Endothelial cell of umbilical vein (primary cell): ENCODE measurements at regions of chr4 and their contacts with region 1.

Region 1: GRCh38 chr4:163554870-163555465 is 60.5 kb downstream of the TMA16 start:
- DNase-seq: peak; percentile 28
- H3K4me3 ChIP-seq: no peak overlapping the region
- H3K27ac ChIP-seq: no peak overlapping the region
- H3K4me1 ChIP-seq: no peaks in the 10 kb centered on the region
- H3K27me3 ChIP-seq: peaks cover 0 to 3% of the 10 kb centered on the region in 2 experiments
- CTCF ChIP-seq: peak; percentile 39 to 40
- POLR2A ChIP-seq: no peak

Region 2: DNA sequence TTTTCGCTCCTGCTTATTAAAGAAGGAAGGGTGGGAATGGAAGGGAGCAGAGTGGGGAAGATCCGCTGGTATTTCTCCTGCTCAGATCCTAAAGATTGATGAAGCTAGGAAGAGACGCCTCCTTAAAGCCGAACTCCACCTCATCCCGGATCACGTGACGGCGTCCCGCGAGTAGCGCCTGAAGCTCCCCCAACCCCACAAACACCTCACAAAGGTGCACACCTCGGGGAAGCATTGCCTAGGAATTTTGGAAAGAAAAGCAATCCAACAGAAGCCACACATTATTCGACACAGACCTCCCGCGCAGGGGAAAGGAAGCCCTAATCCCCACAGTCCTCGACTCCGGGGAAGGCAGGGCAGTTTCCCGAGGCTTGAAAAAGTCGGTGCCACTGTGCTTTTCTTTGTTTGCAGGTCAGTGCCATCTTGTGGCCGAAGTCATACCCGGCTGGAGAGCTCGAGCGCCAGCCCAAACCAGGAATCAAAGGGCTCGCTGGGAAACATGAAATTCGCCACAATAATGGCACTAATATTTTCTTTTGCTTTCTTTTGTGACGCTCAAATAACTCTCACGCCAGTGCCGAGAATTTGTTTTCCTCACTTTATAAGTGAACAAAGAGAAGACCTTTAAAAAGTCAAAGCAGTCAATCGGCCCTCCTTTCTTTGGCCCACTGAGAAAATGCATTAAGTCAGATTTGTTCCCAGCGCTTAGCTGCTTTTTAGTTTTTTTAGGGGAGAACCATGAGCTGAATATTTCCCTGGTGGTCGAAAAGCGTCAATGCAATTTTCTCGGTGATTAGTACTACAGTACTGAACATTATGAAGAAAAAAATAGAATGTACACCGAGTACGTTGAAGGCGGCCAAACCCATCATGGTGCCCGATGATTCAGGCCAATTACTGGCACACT is 222.2 kb before region 1 on chr4 and contains the start of gene NPY1R:
- CTCF ChIA-PET with region 1: interaction called, 16 read pairs
- POLR2A ChIA-PET with region 1: no interaction called
- dilution Hi-C with region 1: no loop called
- intact Hi-C with region 1: no loop called
- DNase-seq: peak; percentile 80
- H3K4me3 ChIP-seq: peak within 1 kb of the TSS in 2 of 3 experiments; percentile 39 to 42
- H3K27ac ChIP-seq: no peak within 1 kb of the TSS
- H3K4me1 ChIP-seq: peaks cover 6% of the 10 kb centered on the region
- H3K27me3 ChIP-seq: peaks cover 21 to 29% of the 10 kb centered on the region in 2 experiments
- CTCF ChIP-seq: peak; percentile 68 to 81
- POLR2A ChIP-seq: no peak
- total RNA-seq, gene NPY1R: not detected in 2 replicates

Region 3: DNA sequence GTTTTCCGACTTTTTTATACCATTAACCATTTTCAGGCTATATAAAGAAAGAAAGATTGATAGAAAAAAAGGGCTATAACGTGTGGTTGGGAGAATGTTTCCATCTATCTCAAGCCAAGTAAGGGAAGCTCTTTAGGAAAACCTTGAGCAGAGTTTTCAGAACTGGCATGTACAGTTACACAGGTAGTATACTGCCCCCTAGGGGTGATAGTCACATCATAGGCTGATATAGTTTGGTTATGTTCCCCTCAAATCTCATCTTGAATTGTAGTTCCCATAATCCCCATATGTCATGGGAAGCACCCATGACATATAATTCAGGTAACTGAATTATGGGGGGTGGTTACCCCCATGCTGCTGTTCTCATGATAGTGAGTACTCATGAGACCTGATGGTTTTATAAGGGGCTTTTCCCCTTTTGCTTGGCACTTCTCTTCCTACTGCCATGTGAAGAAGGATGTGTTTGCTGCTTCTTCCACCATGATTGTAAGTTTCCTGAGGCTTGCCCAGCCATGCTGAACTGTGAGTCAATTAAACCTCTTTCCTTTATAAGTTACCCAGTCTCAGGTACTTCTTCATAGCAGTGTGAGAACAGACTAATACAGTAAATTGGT is 126.3 kb after region 1 on chr4:
- CTCF ChIA-PET with region 1: interaction called, 3 read pairs
- POLR2A ChIA-PET with region 1: no interaction called
- dilution Hi-C with region 1: no loop called
- intact Hi-C with region 1: loop called (anchors 5 kb)
- DNase-seq: peak; percentile 3
- H3K4me3 ChIP-seq: no peak overlapping the region
- H3K27ac ChIP-seq: no peak overlapping the region
- H3K4me1 ChIP-seq: no peaks in the 10 kb centered on the region
- H3K27me3 ChIP-seq: no peaks in the 10 kb centered on the region
- CTCF ChIP-seq: peak; percentile 9 to 39
- POLR2A ChIP-seq: no peak

Region 4: GRCh38 chr4:164012396-164013027 is 457.5 kb after region 1 on chr4:
- CTCF ChIA-PET with region 1: no interaction called
- POLR2A ChIA-PET with region 1: no interaction called
- dilution Hi-C with region 1: no loop called
- intact Hi-C with region 1: loop called (anchors 2 kb)
- DNase-seq: no peak
- H3K4me3 ChIP-seq: no peak overlapping the region
- H3K27ac ChIP-seq: no peak overlapping the region
- H3K4me1 ChIP-seq: no peaks in the 10 kb centered on the region
- H3K27me3 ChIP-seq: no peaks in the 10 kb centered on the region
- CTCF ChIP-seq: no peak
- POLR2A ChIP-seq: no peak

Region 5: GRCh38 chr4:164731827-164732474 is 1177.0 kb after region 1 on chr4:
- CTCF ChIA-PET with region 1: interaction called, 211 read pairs
- POLR2A ChIA-PET with region 1: no interaction called
- dilution Hi-C with region 1: no loop called
- intact Hi-C with region 1: loop called (anchors 1 kb)
- DNase-seq: peak; percentile 46
- H3K4me3 ChIP-seq: no peak overlapping the region
- H3K27ac ChIP-seq: no peak overlapping the region
- H3K4me1 ChIP-seq: no peaks in the 10 kb centered on the region
- H3K27me3 ChIP-seq: no peaks in the 10 kb centered on the region
- CTCF ChIP-seq: peak; percentile 73 to 74
- POLR2A ChIP-seq: no peak

Region 6: GRCh38 chr4:164748375-164748774 is 1193.4 kb after region 1 on chr4:
- CTCF ChIA-PET with region 1: interaction called, 12 read pairs
- POLR2A ChIA-PET with region 1: no interaction called
- dilution Hi-C with region 1: no loop called
- intact Hi-C with region 1: loop called (anchors 1 kb)
- DNase-seq: peak; percentile 20
- H3K4me3 ChIP-seq: no peak overlapping the region
- H3K27ac ChIP-seq: no peak overlapping the region
- H3K4me1 ChIP-seq: no peaks in the 10 kb centered on the region
- H3K27me3 ChIP-seq: no peaks in the 10 kb centered on the region
- CTCF ChIP-seq: peak in 1 of 2 donors; percentile 12
- POLR2A ChIP-seq: no peak

Region 7: GRCh38 chr4:165096776-165097175 is 1541.8 kb after region 1 on chr4:
- CTCF ChIA-PET with region 1: interaction called, 23 read pairs
- POLR2A ChIA-PET with region 1: no interaction called
- dilution Hi-C with region 1: no loop called
- intact Hi-C with region 1: loop called (anchors 5 kb)
- DNase-seq: peak; percentile 20
- H3K4me3 ChIP-seq: no peak overlapping the region
- H3K27ac ChIP-seq: no peak overlapping the region
- H3K4me1 ChIP-seq: no peaks in the 10 kb centered on the region
- H3K27me3 ChIP-seq: no peaks in the 10 kb centered on the region
- CTCF ChIP-seq: peak; percentile 28 to 37
- POLR2A ChIP-seq: no peak